Dorsolateral prefrontal cortex (tissue), 120 donors: ENCODE measurements at regions of chr7 and their contacts with region 1.

Region 1: GRCh38 chr7:150404805-150405583 is 25.9 kb downstream of the ZNF775 start:
- DNase-seq: peak; percentile 80 to 93 (median 90)
- H3K4me3 ChIP-seq: peak overlapping the region; percentile 62 to 91 (median 82)
- H3K27ac ChIP-seq: peak overlapping the region; percentile 79 to 99 (median 96)
- H3K27me3 ChIP-seq: no peaks in the 10 kb centered on the region
- CTCF ChIP-seq: peak in 52 of 56 donors; percentile 6 to 68 (median 46)

Region 2: GRCh38 chr7:149873074-149873969 is 531.7 kb before region 1 on chr7 and contains the start of gene ATP6V0E2:
- intact Hi-C with region 1: loop called in 1 of 2 experiments (anchors 10 kb)
- DNase-seq: peak; percentile 92 to 98 (median 97)
- H3K4me3 ChIP-seq: peak within 1 kb of the TSS; percentile 68 to 99 (median 91)
- H3K27ac ChIP-seq: peak within 1 kb of the TSS; percentile 71 to 97 (median 93)
- H3K27me3 ChIP-seq: no peaks in the 10 kb centered on the region
- CTCF ChIP-seq: peak in 22 of 56 donors; percentile 7 to 58 (median 32)
- total RNA-seq, gene ATP6V0E2: 174 to 369 (median 255) TPM

Region 3: GRCh38 chr7:150368096-150368883 is 36.7 kb before region 1 on chr7 and contains the start of gene REPIN1:
- intact Hi-C with region 1: loop called (anchors 2 to 5 kb)
- DNase-seq: peak; percentile 81 to 94 (median 86)
- H3K4me3 ChIP-seq: peak within 1 kb of the TSS; percentile 61 to 97 (median 89)
- H3K27ac ChIP-seq: peak within 1 kb of the TSS; percentile 83 to 99 (median 97)
- H3K27me3 ChIP-seq: no peaks in the 10 kb centered on the region
- CTCF ChIP-seq: peak in 18 of 56 donors; percentile 3 to 42 (median 25)
- total RNA-seq, gene REPIN1: 82.2 to 205 (median 110) TPM

Region 4: DNA sequence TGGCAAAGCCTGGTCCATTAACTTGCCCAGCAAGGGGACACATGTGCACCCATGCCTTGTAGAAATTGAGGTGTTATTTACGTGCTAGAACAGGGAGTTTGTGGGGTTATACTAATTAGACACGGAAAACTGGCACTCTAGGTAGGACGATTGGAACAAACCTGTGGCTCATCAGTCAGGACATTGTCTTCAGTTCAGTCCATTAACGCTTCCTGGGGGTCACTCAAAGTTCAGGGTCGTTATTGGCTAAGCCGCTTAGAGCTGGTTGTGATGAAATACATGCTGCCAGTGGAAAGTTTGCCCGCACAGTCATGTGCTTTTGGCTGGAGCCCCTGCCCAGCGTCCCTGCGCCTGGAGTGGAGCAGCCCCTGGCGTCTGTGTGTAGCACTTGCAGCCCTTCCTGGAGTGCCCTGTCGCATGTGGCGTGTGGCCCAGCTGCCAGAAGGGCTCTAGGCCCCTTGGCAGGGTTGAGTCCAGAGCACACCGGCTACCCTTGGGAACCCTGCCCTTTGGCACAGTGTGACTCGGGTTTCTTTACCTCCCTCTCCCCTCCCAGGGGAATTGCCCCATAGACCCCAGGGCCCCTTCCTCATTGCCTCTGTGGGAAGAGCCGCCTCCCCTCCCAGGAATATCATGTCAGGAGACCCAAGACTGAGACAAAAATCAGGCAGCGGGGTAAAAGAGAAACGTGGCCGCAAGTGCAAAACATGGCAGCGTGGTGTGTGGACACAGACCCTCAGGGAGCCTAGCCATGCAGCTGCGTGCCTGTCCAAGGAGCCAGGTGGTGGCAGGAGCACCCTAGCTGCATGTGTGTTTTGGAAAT is 16.1 kb before region 1 on chr7:
- intact Hi-C with region 1: loop called in 1 of 2 experiments (anchors 2 kb)
- DNase-seq: peak; percentile 67 to 84 (median 80)
- H3K4me3 ChIP-seq: peak overlapping the region in 10 of 59 donors; percentile 1 to 25 (median 12)
- H3K27ac ChIP-seq: peak overlapping the region in 57 of 59 donors; percentile 2 to 99 (median 79)
- H3K27me3 ChIP-seq: no peaks in the 10 kb centered on the region
- CTCF ChIP-seq: peak; percentile 52 to 98 (median 85)